ENCODE measurements at regions of chr1 and their contacts with region 1.

Region 1: DNA sequence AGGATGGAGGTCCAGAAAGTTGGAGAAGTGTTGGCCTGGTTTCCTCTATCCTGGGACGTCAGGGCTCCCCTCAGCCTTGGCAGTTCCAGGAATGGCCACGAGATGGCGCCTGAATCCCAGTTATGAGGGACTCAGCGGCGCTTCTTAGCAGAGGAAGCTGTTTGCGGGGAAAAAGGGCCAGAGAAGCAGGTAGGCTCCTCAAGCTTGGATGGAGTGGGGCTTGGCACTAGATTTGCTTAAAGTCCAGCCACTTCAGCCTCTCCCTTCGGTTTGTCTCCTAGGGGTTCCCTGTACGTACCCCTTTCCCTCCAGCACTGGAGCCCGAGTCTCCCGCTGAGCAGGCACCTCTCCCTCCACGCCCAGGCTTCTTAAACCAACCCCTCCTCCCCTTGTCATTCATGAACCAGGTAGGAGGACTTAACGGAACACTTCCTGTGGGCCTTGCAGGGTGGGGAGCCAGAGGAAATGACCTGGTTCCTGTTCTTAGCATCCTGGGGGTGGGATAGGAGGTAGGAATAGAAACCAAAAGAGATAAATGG is 32.0 kb upstream of the TENT5B start:
- DNase-seq: peak; percentile 74
- ATAC-seq: peak; percentile 92
- H3K4me3 ChIP-seq: peak overlapping the region in 1 of 2 experiments; percentile 34; a peak in 2 of 4 replicates
- H3K27ac ChIP-seq: peak overlapping the region; percentile 34; the same call in 1 of the 2 replicates
- H3K4me1 ChIP-seq: peaks cover 5% of the 10 kb centered on the region; the same call in 1 of the 2 replicates
- H3K27me3 ChIP-seq: no peaks in the 10 kb centered on the region
- CTCF ChIP-seq: peak; percentile 95

Region 2: GRCh38 chr1:27057801-27058625 is 13.3 kb after region 1 on chr1:
- CTCF ChIA-PET with region 1: interaction called, 10 read pairs
- POLR2A ChIA-PET with region 1: no interaction called
- in situ Hi-C with region 1: no loop called
- intact Hi-C with region 1: no loop called
- DNase-seq: no peak
- ATAC-seq: peak; percentile 72
- H3K4me3 ChIP-seq: no peak overlapping the region
- H3K27ac ChIP-seq: no peak overlapping the region
- H3K4me1 ChIP-seq: no peaks in the 10 kb centered on the region
- H3K27me3 ChIP-seq: no peaks in the 10 kb centered on the region
- CTCF ChIP-seq: no peak

Region 3: DNA sequence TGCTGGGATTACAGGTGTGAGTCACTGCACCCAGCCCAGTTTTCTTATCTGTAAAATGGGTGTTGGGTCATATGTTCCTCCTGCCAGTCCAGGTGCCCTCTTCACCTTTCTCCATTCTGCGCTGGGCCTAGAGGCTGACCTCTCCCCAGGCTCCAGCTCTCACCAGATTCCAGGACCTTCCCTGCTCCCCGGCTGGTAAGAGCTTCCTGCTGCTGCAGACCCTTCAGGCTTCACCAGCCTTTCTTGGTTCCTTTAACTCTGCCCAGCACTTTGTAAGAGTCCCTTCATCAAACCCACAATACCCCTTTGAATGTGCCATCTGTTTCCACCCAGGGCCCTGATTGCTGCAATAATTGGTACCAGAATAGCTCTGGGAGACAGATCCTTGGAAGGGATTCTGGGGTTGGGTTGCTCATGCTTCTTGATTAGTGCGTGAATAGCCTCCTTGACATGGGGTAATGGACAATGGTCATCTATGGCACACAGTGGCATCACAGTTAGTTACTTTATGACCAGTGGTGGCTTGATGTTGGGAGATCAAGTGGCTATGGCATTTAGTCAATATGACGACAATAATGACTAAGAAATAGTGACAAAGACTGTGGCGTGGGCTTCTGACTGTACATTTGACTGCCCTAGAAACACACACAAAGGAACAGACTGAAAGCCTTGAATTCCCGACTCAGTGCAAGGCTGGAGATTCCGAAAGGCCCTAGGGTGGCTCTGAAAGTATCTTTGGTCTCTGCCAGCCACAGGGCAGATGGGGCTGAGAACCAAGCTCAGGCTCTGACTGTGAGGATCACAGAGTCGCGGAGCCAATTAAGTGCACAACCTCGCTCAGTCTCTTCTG is 42.9 kb after region 1 on chr1:
- CTCF ChIA-PET with region 1: interaction called, 10 read pairs
- POLR2A ChIA-PET with region 1: no interaction called
- in situ Hi-C with region 1: no loop called
- intact Hi-C with region 1: no loop called
- DNase-seq: no peak
- ATAC-seq: no peak; the same call in 1 of the 2 replicates
- H3K4me3 ChIP-seq: no peak overlapping the region
- H3K27ac ChIP-seq: no peak overlapping the region
- H3K4me1 ChIP-seq: no peaks in the 10 kb centered on the region
- H3K27me3 ChIP-seq: no peaks in the 10 kb centered on the region
- CTCF ChIP-seq: no peak

Region 4: DNA sequence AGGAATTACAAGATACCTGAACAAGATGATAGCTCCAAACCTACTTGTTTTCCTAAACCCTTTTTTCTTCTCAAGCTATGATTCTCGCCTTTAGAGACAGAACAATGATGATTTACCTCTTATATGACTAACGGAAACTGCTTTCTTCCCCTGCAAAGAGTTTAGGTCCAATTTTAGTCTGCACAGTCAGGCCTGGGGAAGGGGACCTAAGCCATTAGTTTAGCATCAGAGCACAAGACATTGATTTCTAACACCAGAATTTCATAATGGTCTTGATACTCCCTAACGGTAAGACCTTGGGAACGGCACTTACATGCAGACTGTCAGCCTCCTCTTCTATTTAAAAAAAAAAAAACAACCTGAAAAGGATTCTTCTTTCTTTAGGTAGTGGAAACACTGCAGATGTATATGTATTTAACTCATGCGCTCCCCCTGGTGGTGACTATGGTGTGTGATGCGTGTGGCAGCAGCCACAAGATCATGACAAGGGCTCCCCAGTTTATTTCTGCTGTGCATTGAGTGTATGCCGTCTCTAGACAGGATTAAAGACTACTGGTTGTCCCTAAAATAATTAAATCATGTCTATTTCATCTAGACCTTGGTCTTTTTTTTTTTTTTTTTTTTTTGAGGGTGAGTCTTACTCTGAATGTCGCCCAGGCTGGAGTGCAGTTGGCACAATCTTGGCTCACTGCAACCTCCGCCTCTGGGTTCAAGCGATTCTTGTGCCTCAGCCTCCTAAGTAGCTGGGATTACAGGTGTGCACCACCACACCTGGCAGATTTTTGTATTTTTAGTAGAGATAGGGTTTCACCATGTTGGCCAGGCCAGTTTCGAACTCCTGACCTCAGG is 240.0 kb after region 1 on chr1:
- CTCF ChIA-PET with region 1: interaction called, 3 read pairs
- POLR2A ChIA-PET with region 1: no interaction called
- in situ Hi-C with region 1: no loop called
- intact Hi-C with region 1: loop called (anchors 10 kb)
- DNase-seq: peak; percentile 52
- ATAC-seq: peak; percentile 96
- H3K4me3 ChIP-seq: no peak overlapping the region
- H3K27ac ChIP-seq: no peak overlapping the region
- H3K4me1 ChIP-seq: no peaks in the 10 kb centered on the region
- H3K27me3 ChIP-seq: no peaks in the 10 kb centered on the region
- CTCF ChIP-seq: peak; percentile 89